Activated CD4-positive, alpha-beta memory T cell treated with anti-CD3 and anti-CD28 coated beads for 36 hours (primary cell): ENCODE measurements at regions of chr6 and their contacts with region 1.

Region 1: DNA sequence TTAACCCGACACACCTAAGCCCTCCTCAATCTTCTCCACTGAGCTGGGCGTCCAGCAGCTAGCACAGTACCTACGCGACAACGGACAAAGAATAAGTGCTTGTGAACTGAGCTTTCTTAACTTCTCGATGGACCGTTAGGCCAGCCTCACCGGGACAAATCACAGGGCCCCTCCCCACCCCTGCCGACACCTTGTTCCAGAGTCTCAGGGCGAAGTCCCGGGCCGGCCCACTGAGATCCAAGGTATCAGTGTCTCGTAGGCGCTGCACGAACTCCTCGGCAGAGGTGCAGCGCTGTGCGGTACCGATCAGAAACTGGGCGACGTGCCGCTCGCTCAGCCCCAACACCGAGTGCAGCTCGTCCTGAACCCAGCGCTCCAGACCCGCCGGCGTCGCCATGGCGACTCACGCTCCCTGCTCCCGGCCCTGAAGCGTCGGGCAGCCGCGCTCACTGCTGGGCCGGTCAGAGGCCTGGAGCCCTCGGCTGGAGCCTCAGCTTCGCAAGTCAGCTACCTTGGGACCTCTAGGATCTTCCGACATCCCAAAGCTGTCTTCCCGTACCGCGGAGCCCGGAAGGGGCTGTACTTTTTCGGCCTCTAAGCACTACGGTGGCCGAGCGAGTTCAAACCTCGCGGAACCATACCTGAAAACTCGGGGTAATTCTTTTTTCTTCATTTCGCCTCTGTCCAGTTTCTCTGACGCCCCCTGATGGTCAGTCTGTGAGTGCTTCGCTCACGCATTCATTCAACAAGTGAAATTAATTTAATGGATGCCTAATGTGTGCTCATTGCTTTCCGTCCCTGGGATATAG is at the start of gene DHX16:
- DNase-seq: peak; percentile 93
- H3K4me3 Mint-ChIP-seq: peak within 1 kb of the TSS; percentile 91
- H3K27ac Mint-ChIP-seq: peak within 1 kb of the TSS; percentile 84
- H3K4me1 Mint-ChIP-seq: peaks cover 30% of the 10 kb centered on the region
- H3K27me3 Mint-ChIP-seq: no peaks in the 10 kb centered on the region
- total RNA-seq, gene DHX16: 33.1 to 35.3 TPM

Region 2: DNA sequence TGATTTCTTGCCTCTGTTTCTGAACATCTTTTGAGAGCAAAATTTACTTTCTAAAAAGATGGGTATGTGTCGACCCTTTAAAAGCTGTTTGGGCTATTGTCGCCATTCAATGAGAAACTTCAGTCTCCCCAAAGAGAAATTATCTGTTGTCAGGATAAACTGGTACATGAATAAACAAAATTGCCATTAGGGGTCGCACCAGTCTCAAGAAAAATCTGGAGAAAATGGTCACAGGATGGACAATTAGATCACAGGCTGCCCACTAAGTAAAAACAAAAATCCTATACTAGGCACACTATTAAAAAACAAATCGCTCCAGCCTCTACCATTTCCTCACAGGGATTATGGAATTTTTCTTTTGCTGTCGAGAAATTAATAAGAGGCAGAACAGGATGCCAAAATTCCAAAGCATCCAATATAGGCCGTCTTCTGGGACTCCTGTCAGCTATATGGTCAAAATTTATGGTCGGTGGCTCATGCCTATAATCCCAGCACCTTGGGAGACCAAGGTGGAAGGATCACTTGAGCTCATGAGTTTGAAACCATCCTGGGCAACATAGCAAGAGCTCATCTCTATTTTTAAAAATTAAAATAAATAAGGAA is 188.9 kb before region 1 on chr6:
- CTCF ChIA-PET with region 1: interaction called, 7 read pairs
- POLR2A ChIA-PET with region 1: no interaction called
- intact Hi-C with region 1: loop called (anchors 2 kb)
- DNase-seq: no peak
- H3K4me3 Mint-ChIP-seq: no peak overlapping the region
- H3K27ac Mint-ChIP-seq: no peak overlapping the region
- H3K4me1 Mint-ChIP-seq: peaks cover 34% of the 10 kb centered on the region
- H3K27me3 Mint-ChIP-seq: peaks cover 29% of the 10 kb centered on the region

Region 3: GRCh38 chr6:30646458-30647241 is 26.0 kb before region 1 on chr6 and contains the start of gene C6orf136:
- CTCF ChIA-PET with region 1: interaction called, 4 read pairs
- POLR2A ChIA-PET with region 1: no interaction called
- intact Hi-C with region 1: loop called (anchors 2 kb)
- DNase-seq: peak; percentile 96
- H3K4me3 Mint-ChIP-seq: peak within 1 kb of the TSS; percentile 89
- H3K27ac Mint-ChIP-seq: peak within 1 kb of the TSS; percentile 89
- H3K4me1 Mint-ChIP-seq: peaks cover 25% of the 10 kb centered on the region
- H3K27me3 Mint-ChIP-seq: no peaks in the 10 kb centered on the region
- total RNA-seq, gene C6orf136: 32.7 to 37.5 TPM

Region 4: GRCh38 chr6:31068669-31069340 is 396.2 kb after region 1 on chr6:
- CTCF ChIA-PET with region 1: no interaction called
- POLR2A ChIA-PET with region 1: no interaction called
- intact Hi-C with region 1: no loop called
- DNase-seq: peak; percentile 81
- H3K4me3 Mint-ChIP-seq: no peak overlapping the region
- H3K27ac Mint-ChIP-seq: no peak overlapping the region
- H3K4me1 Mint-ChIP-seq: no peaks in the 10 kb centered on the region
- H3K27me3 Mint-ChIP-seq: no peaks in the 10 kb centered on the region

Region 5: GRCh38 chr6:31739639-31740396 is 1067.2 kb after region 1 on chr6 and contains the start of gene MSH5:
- CTCF ChIA-PET with region 1: no interaction called
- POLR2A ChIA-PET with region 1: no interaction called
- intact Hi-C with region 1: no loop called
- DNase-seq: peak; percentile 99
- H3K4me3 Mint-ChIP-seq: peak within 1 kb of the TSS; percentile 94
- H3K27ac Mint-ChIP-seq: peak within 1 kb of the TSS; percentile 91
- H3K4me1 Mint-ChIP-seq: peaks cover 48% of the 10 kb centered on the region
- H3K27me3 Mint-ChIP-seq: no peaks in the 10 kb centered on the region
- total RNA-seq, gene MSH5: 80.9 to 83.8 TPM